Heart left ventricle (tissue), 16 donors: ENCODE measurements at regions of chr7 and their contacts with region 1.

Region 1: DNA sequence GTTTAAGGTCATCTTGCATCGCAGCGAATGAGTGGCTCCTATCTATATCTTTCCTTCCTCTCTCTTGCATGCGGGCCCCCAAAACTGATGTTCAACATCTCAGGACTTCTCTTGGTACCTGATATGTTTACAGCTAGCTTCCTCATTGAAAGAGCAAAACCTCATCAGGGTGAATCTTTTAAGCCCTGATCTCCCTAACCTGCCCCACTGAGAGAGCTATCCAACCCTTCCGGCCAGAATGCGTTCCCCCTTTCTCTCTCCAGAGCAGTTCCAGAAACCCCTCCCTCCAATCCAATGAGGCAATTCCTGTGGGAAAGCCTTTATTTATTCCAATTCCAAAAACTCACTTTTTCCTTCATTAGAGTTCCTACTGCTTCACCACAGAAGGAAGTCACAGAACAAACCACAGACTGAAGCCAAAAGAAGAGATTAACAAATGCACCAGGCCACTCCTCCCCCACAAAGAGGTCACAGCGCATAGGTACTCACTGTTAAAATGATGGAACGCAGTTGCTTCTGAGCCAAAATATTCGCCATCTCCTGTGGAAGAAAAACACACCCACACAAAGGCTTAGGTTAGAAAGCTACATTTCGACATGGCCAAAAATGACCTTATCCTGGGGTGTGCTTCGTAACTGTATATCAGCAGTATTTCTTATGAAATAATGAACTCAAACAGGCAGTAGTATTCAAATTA is 232.4 kb downstream of the ELMO1 start:
- DNase-seq: peak in 1 of 5 donors; percentile 29
- ATAC-seq: peak in 3 of 4 donors; percentile 69 to 82 (median 77)
- H3K4me3 ChIP-seq: no peak overlapping the region
- H3K27ac ChIP-seq: peak overlapping the region in 5 of 12 donors; percentile 4 to 40 (median 37)
- H3K4me1 ChIP-seq: peaks cover 0 to 55% (median 30%) of the 10 kb centered on the region in 12 donors
- H3K27me3 ChIP-seq: no peaks in the 10 kb centered on the region
- CTCF ChIP-seq: no peak
- POLR2A ChIP-seq: no peak

Region 2: GRCh38 chr7:37173670-37174069 is 42.6 kb before region 1 on chr7:
- intact Hi-C with region 1: no loop called
- DNase-seq: no peak
- ATAC-seq: no peak
- H3K4me3 ChIP-seq: no peak overlapping the region
- H3K27ac ChIP-seq: no peak overlapping the region
- H3K4me1 ChIP-seq: peaks cover 0 to 3% (median 0%) of the 10 kb centered on the region in 12 donors
- H3K27me3 ChIP-seq: no peaks in the 10 kb centered on the region
- CTCF ChIP-seq: no peak
- POLR2A ChIP-seq: no peak

Region 3: GRCh38 chr7:37826825-37827224 is 610.5 kb after region 1 on chr7:
- intact Hi-C with region 1: loop called in 1 of 10 experiments (anchors 5 kb)
- DNase-seq: no peak
- ATAC-seq: no peak
- H3K4me3 ChIP-seq: no peak overlapping the region
- H3K27ac ChIP-seq: no peak overlapping the region
- H3K4me1 ChIP-seq: peaks cover 0 to 4% (median 0%) of the 10 kb centered on the region in 12 donors
- H3K27me3 ChIP-seq: no peaks in the 10 kb centered on the region
- CTCF ChIP-seq: no peak
- POLR2A ChIP-seq: no peak